GM12878 (cell line): ENCODE measurements at regions of chr17 and their contacts with region 1.

Region 1: GRCh38 chr17:50169121-50169764 is 3.4 kb downstream of the SGCA start:
- DNase-seq: peak; percentile 44
- ATAC-seq: peak; percentile 73
- H3K4me3 ChIP-seq: no peak overlapping the region
- H3K27ac ChIP-seq: no peak overlapping the region
- H3K4me1 ChIP-seq: peaks cover 18% of the 10 kb centered on the region
- H3K27me3 ChIP-seq: no peaks in the 10 kb centered on the region
- CTCF ChIP-seq: peak; percentile 88 to 95 (median 90)
- EP300 ChIP-seq: no peak
- POLR2A ChIP-seq: no peak
- RAD21 ChIP-seq: peak; percentile 96

Region 2: GRCh38 chr17:50151041-50151936 is 18.0 kb before region 1 on chr17:
- CTCF ChIA-PET with region 1: interaction called, 15 read pairs
- POLR2A ChIA-PET with region 1: interaction called, 18 read pairs
- RAD21 ChIA-PET with region 1: interaction called, 19 read pairs
- SMC1A ChIA-PET with region 1: interaction called, 5 read pairs
- in situ Hi-C with region 1: no loop called
- intact Hi-C with region 1: no loop called
- DNase-seq: peak; percentile 63
- ATAC-seq: peak; percentile 67
- H3K4me3 ChIP-seq: peak overlapping the region; percentile 95
- H3K27ac ChIP-seq: peak overlapping the region; percentile 89
- H3K4me1 ChIP-seq: peaks cover 46% of the 10 kb centered on the region
- H3K27me3 ChIP-seq: no peaks in the 10 kb centered on the region
- CTCF ChIP-seq: peak; percentile 49 to 84 (median 66)
- EP300 ChIP-seq: no peak; a peak in 1 of 4 replicates
- POLR2A ChIP-seq: peak; percentile 70
- RAD21 ChIP-seq: no peak

Region 3: DNA sequence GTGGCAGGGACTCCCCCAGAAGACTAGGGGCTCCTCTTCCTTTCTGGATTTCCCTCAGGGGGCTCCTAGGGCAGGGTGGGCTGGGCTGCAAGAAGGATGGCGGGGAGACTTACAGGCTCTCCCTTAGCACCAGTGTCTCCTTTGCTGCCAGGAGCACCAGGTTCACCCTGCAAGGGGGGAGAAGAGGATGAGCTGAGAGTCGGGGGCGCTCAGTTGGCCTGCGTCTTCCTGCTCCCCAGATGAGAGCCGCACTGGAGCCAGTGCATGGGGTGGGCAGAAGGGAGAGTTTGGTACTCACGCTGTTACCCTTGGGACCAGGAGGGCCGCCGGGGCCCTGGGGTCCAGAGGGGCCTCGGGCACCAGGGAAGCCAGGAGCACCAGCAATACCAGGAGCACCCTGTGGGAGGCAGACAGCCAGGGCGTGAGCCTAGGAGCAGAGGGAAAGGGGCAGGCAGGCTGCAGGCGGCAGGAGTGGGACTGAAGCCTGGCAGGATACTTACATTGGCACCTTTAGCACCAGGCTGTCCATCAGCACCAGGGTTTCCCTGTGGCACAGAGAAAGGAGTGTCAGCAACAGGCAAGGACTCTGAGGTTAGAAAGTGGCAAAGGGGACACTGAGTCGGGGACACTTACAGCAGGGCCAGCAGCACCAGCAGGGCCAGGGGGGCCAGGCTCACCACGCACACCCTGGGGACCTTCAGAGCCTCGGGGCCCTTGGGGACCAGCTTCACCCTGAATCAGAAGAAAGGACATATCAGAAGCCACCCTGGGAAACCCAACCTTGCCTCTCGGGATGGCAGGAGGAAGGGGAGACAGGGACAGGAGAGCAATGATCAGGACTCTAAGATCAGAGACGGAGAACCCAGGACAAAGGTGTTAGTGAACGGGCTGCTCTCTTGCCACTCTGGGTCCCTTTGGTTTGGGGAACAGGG is 26.0 kb after region 1 on chr17:
- CTCF ChIA-PET with region 1: interaction called, 514 read pairs
- POLR2A ChIA-PET with region 1: interaction called, 28 read pairs
- RAD21 ChIA-PET with region 1: interaction called, 176 read pairs
- SMC1A ChIA-PET with region 1: interaction called, 177 read pairs
- in situ Hi-C with region 1: loop called (anchors 5 kb)
- intact Hi-C with region 1: loop called (anchors 1 kb)
- DNase-seq: no peak
- ATAC-seq: no peak
- H3K4me3 ChIP-seq: no peak overlapping the region
- H3K27ac ChIP-seq: no peak overlapping the region
- H3K4me1 ChIP-seq: peaks cover 23% of the 10 kb centered on the region
- H3K27me3 ChIP-seq: no peaks in the 10 kb centered on the region
- CTCF ChIP-seq: 0 out of 6 replicates have a peak, but pooled peaks of 1 of the 3 experiments have one; percentile 5
- EP300 ChIP-seq: no peak
- POLR2A ChIP-seq: no peak
- RAD21 ChIP-seq: no peak

Region 4: GRCh38 chr17:50269477-50270434 is 100.5 kb after region 1 on chr17:
- CTCF ChIA-PET with region 1: interaction called, 33 read pairs
- POLR2A ChIA-PET with region 1: no interaction called
- RAD21 ChIA-PET with region 1: interaction called, 8 read pairs
- SMC1A ChIA-PET with region 1: interaction called, 10 read pairs
- in situ Hi-C with region 1: no loop called
- intact Hi-C with region 1: no loop called
- DNase-seq: peak; percentile 19
- ATAC-seq: peak; percentile 86
- H3K4me3 ChIP-seq: no peak overlapping the region
- H3K27ac ChIP-seq: no peak overlapping the region
- H3K4me1 ChIP-seq: no peaks in the 10 kb centered on the region; the same call in 1 of the 2 replicates
- H3K27me3 ChIP-seq: no peaks in the 10 kb centered on the region
- CTCF ChIP-seq: peak; percentile 77 to 87 (median 85)
- EP300 ChIP-seq: no peak
- POLR2A ChIP-seq: no peak
- RAD21 ChIP-seq: peak; percentile 65

Region 5: GRCh38 chr17:50318501-50319285 is 149.4 kb after region 1 on chr17:
- CTCF ChIA-PET with region 1: interaction called, 10 read pairs
- POLR2A ChIA-PET with region 1: no interaction called
- RAD21 ChIA-PET with region 1: interaction called, 3 read pairs
- SMC1A ChIA-PET with region 1: interaction called, 3 read pairs
- in situ Hi-C with region 1: no loop called
- intact Hi-C with region 1: no loop called
- DNase-seq: no peak
- ATAC-seq: no peak
- H3K4me3 ChIP-seq: no peak overlapping the region
- H3K27ac ChIP-seq: no peak overlapping the region
- H3K4me1 ChIP-seq: peaks cover 4% of the 10 kb centered on the region; the same call in 1 of the 2 replicates
- H3K27me3 ChIP-seq: no peaks in the 10 kb centered on the region
- CTCF ChIP-seq: no peak
- EP300 ChIP-seq: no peak
- POLR2A ChIP-seq: no peak
- RAD21 ChIP-seq: no peak